ENCODE measurements at regions of chr3 and their contacts with region 1.

Region 1: GRCh38 chr3:141738022-141738890 is at the start of gene RNF7:
- H3K4me3 Mint-ChIP-seq: peak within 1 kb of the TSS; percentile 99
- H3K27ac Mint-ChIP-seq: peak within 1 kb of the TSS; percentile 100
- H3K4me1 Mint-ChIP-seq: peaks cover 46% of the 10 kb centered on the region
- H3K27me3 Mint-ChIP-seq: no peaks in the 10 kb centered on the region

Region 2: DNA sequence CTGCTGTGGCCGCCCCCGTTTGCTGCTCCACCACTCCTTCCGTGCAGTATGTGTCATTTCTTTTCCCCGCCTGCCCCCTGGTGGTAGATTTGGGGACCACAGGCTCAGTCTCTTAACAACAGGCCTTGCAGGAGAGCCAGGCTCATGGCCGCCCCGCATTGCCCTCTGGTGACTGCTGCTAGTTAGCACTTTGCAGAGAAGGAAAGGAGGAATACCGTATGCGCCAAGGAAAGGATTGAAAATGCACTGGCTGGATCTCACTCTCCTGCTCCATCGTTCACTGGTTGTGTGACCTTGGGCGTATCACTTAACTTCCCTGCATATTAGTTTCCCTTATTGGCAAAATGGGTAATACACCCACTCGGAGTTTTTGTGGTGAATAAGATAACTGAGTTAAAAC is 545.9 kb before region 1 on chr3:
- intact Hi-C with region 1: no loop called
- H3K4me3 Mint-ChIP-seq: no peak overlapping the region
- H3K27ac Mint-ChIP-seq: no peak overlapping the region
- H3K4me1 Mint-ChIP-seq: peaks cover 10% of the 10 kb centered on the region
- H3K27me3 Mint-ChIP-seq: peaks cover 22% of the 10 kb centered on the region

Region 3: GRCh38 chr3:141477224-141477623 is 261.0 kb before region 1 on chr3:
- intact Hi-C with region 1: no loop called
- H3K4me3 Mint-ChIP-seq: no peak overlapping the region
- H3K27ac Mint-ChIP-seq: no peak overlapping the region
- H3K4me1 Mint-ChIP-seq: peaks cover 16% of the 10 kb centered on the region
- H3K27me3 Mint-ChIP-seq: no peaks in the 10 kb centered on the region

Region 4: DNA sequence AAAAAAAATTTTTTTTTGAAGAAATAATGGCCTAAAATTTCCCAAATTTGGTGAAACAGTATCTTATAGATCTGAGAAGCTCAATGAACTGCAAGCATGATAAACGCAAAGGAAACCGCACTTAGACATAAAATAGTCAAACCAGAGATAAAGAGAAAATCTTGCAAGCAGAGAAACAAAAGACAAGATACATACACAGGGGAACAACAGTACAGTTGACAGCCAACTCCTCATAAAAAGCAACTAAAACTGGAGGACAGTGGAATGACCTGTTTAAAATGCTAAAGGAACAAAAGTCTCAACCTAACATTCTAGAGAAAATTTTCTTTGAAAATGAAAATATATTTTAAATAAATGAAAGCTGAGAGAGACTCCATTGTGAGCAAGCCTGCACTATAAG is 143.9 kb before region 1 on chr3:
- intact Hi-C with region 1: loop called (anchors 5 kb)
- H3K4me3 Mint-ChIP-seq: no peak overlapping the region
- H3K27ac Mint-ChIP-seq: no peak overlapping the region
- H3K4me1 Mint-ChIP-seq: peaks cover 20% of the 10 kb centered on the region
- H3K27me3 Mint-ChIP-seq: no peaks in the 10 kb centered on the region

Region 5: DNA sequence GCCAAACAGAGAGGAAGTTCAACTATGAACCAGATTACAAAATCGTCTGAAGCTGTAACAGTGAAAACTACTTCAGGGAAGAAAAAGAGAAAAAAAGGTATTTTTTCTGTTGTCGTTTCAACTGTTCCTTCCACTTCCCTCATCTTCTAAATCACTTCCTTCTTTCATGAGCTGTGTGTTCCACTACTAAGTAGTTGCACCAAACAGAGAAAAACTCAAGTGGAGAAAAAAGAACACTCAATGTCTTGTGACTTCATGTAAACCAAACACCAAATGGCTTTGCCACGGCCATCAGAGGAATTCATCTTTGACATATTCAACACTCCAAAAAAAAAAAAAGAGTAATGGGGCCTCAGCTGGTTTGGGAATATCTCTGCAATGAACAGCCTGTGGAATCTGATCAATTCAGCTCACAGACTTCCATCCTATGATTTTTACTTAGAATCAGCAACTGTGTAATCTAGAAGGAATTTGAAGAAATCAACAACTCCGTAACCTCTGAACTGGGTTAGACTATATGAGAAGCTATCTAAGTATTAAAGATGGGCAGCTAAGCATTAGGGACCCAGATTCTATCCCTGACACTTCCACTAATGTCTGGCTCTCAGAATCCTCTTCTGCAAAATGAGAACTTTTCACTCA is 47.7 kb before region 1 on chr3:
- intact Hi-C with region 1: loop called (anchors 5 kb)
- H3K4me3 Mint-ChIP-seq: no peak overlapping the region
- H3K27ac Mint-ChIP-seq: peak overlapping the region; percentile 58
- H3K4me1 Mint-ChIP-seq: peaks cover 33% of the 10 kb centered on the region
- H3K27me3 Mint-ChIP-seq: no peaks in the 10 kb centered on the region

Region 6: DNA sequence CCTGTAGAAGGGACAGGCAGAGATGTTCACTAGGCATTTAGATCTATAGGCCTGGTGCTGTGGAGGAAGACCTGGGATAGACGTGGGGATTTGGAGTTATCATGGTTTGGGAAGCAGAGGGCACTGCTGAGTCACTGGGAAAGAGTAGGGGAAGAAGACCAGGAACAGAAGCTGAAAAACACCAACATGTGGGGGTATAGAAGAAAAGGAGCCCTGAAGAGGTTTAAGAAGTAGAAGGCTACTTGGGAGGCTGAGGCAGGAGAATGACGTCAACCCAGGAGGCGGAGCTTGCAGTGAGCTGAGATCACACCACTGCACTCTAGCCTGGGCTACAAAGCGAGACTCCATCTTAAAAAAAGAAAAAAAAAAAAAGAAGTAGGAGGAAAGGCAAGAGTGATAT is 44.2 kb after region 1 on chr3:
- intact Hi-C with region 1: no loop called
- H3K4me3 Mint-ChIP-seq: no peak overlapping the region
- H3K27ac Mint-ChIP-seq: no peak overlapping the region
- H3K4me1 Mint-ChIP-seq: peaks cover 5% of the 10 kb centered on the region
- H3K27me3 Mint-ChIP-seq: no peaks in the 10 kb centered on the region

Region 7: DNA sequence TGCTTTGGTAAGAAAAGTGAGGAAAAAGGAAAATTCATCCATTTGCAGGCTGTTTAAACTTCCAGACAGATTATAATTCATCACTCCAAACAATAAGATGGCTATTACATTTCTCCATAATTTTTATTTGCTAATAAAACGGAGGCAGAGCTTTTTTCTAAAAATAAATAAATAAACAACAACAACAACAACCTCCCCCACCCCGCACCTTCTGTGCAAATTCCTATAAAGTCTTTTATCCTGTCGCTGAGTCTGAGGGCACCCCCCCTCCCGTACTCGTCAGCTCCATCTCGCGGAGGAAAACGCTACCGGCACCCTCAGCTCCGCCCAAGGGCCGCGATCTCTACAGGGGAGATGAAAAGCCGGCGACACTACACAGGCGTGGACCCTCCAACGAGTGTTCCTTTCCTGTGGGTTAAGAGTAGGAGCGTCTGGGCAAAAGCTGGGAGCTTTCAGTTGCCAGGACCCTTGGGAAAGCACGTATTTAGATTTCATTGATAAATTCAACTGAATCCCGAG is 137.2 kb after region 1 on chr3:
- intact Hi-C with region 1: loop called (anchors 1 kb)
- H3K4me3 Mint-ChIP-seq: peak overlapping the region; percentile 86
- H3K27ac Mint-ChIP-seq: peak overlapping the region; percentile 99
- H3K4me1 Mint-ChIP-seq: peaks cover 16% of the 10 kb centered on the region
- H3K27me3 Mint-ChIP-seq: no peaks in the 10 kb centered on the region

Measured in dendritic cell treated with granulocyte-macrophage colony-stimulating factor and Interleukin-4, amounts not matched to agents 40 ng/mL and 50 ng/mL, for 4 days (primary cell).